ENCODE measurements at regions of chr5 and their contacts with region 1.

Region 1: DNA sequence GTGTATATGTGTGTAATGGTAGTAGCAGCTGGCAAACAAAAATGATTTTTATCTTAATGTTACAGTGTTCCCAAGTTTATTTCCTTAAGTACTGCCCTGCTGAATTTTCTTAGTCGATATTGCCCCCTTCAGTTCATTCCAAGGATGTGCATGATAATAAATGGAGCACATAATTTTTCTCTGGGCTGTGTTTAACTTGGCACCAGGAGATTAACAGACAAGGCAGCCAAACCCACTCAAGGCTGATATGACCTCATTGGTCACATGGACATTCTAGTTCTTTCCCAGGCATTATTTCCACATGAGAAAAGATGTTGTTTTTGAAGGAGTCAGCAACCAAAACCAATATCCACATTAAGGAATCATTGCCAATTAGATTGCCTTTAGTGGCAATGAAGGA is 61.8 kb downstream of the COX7C start:
- DNase-seq: peak in 2 of 9 experiments; percentile 20 to 38
- ATAC-seq: no peak
- H3K4me3 ChIP-seq: no peak overlapping the region
- H3K4me3 Mint-ChIP-seq: no peak overlapping the region
- H3K27ac ChIP-seq: no peak overlapping the region
- H3K27ac Mint-ChIP-seq: no peak overlapping the region
- H3K4me1 ChIP-seq: no peaks in the 10 kb centered on the region
- H3K4me1 Mint-ChIP-seq: no peaks in the 10 kb centered on the region
- H3K27me3 ChIP-seq: no peaks in the 10 kb centered on the region
- H3K27me3 Mint-ChIP-seq: peaks cover 6% of the 10 kb centered on the region
- CTCF ChIP-seq: peak; percentile 65

Region 2: GRCh38 chr5:85985167-85985566 is 694.4 kb before region 1 on chr5:
- CTCF ChIA-PET with region 1: no interaction called
- POLR2A ChIA-PET with region 1: no interaction called
- intact Hi-C with region 1: loop called in 1 of 2 experiments (anchors 10 kb)
- DNase-seq: no peak
- ATAC-seq: no peak
- H3K4me3 ChIP-seq: no peak overlapping the region
- H3K4me3 Mint-ChIP-seq: no peak overlapping the region
- H3K27ac ChIP-seq: no peak overlapping the region
- H3K27ac Mint-ChIP-seq: no peak overlapping the region
- H3K4me1 ChIP-seq: no peaks in the 10 kb centered on the region
- H3K4me1 Mint-ChIP-seq: no peaks in the 10 kb centered on the region
- H3K27me3 ChIP-seq: no peaks in the 10 kb centered on the region
- H3K27me3 Mint-ChIP-seq: no peaks in the 10 kb centered on the region
- CTCF ChIP-seq: no peak

Region 3: GRCh38 chr5:86463339-86463738 is 216.2 kb before region 1 on chr5:
- CTCF ChIA-PET with region 1: no interaction called
- POLR2A ChIA-PET with region 1: no interaction called
- intact Hi-C with region 1: no loop called
- DNase-seq: no peak
- ATAC-seq: no peak
- H3K4me3 ChIP-seq: no peak overlapping the region
- H3K4me3 Mint-ChIP-seq: no peak overlapping the region
- H3K27ac ChIP-seq: no peak overlapping the region
- H3K27ac Mint-ChIP-seq: no peak overlapping the region
- H3K4me1 ChIP-seq: no peaks in the 10 kb centered on the region
- H3K4me1 Mint-ChIP-seq: no peaks in the 10 kb centered on the region
- H3K27me3 ChIP-seq: no peaks in the 10 kb centered on the region
- H3K27me3 Mint-ChIP-seq: no peaks in the 10 kb centered on the region
- CTCF ChIP-seq: no peak

Region 4: GRCh38 chr5:86570427-86571083 is 109.0 kb before region 1 on chr5:
- CTCF ChIA-PET with region 1: no interaction called
- POLR2A ChIA-PET with region 1: no interaction called
- intact Hi-C with region 1: loop called in 1 of 2 experiments (anchors 10 kb)
- DNase-seq: no peak
- ATAC-seq: no peak
- H3K4me3 ChIP-seq: no peak overlapping the region
- H3K4me3 Mint-ChIP-seq: no peak overlapping the region
- H3K27ac ChIP-seq: no peak overlapping the region
- H3K27ac Mint-ChIP-seq: no peak overlapping the region
- H3K4me1 ChIP-seq: no peaks in the 10 kb centered on the region
- H3K4me1 Mint-ChIP-seq: no peaks in the 10 kb centered on the region
- H3K27me3 ChIP-seq: no peaks in the 10 kb centered on the region
- H3K27me3 Mint-ChIP-seq: no peaks in the 10 kb centered on the region
- CTCF ChIP-seq: no peak

Measured in CD8-positive, alpha-beta T cell (primary cell).